Naive thymus-derived CD4-positive, alpha-beta T cell (primary cell): ENCODE measurements at regions of chr1 and their contacts with region 1.

Region 1: GRCh38 chr1:86380257-86380861 is 15.8 kb downstream of the ODF2L start:
- DNase-seq: peak in 7 of 9 donors; percentile 15 to 64 (median 46)
- ATAC-seq: peak; percentile 90
- H3K4me3 ChIP-seq: no peak overlapping the region
- H3K4me3 Mint-ChIP-seq: peak overlapping the region in 2 of 10 donors; percentile 15 to 45
- H3K27ac ChIP-seq: no peak overlapping the region
- H3K27ac Mint-ChIP-seq: peak overlapping the region in 1 of 9 donors; percentile 59
- H3K4me1 ChIP-seq: peaks cover 0 to 8% of the 10 kb centered on the region in 2 donors
- H3K4me1 Mint-ChIP-seq: peaks cover 1 to 21% (median 16%) of the 10 kb centered on the region in 7 donors
- H3K27me3 ChIP-seq: no peaks in the 10 kb centered on the region
- H3K27me3 Mint-ChIP-seq: no peaks in the 10 kb centered on the region

Region 2: GRCh38 chr1:86247597-86248279 is 132.6 kb before region 1 on chr1:
- CTCF ChIA-PET with region 1: no interaction called
- POLR2A ChIA-PET with region 1: no interaction called
- intact Hi-C with region 1: no loop called
- DNase-seq: no peak
- ATAC-seq: no peak
- H3K4me3 ChIP-seq: no peak overlapping the region
- H3K4me3 Mint-ChIP-seq: no peak overlapping the region
- H3K27ac ChIP-seq: no peak overlapping the region
- H3K27ac Mint-ChIP-seq: no peak overlapping the region
- H3K4me1 ChIP-seq: no peaks in the 10 kb centered on the region
- H3K4me1 Mint-ChIP-seq: no peaks in the 10 kb centered on the region
- H3K27me3 ChIP-seq: no peaks in the 10 kb centered on the region
- H3K27me3 Mint-ChIP-seq: peaks cover 0 to 6% (median 0%) of the 10 kb centered on the region in 5 donors

Region 3: DNA sequence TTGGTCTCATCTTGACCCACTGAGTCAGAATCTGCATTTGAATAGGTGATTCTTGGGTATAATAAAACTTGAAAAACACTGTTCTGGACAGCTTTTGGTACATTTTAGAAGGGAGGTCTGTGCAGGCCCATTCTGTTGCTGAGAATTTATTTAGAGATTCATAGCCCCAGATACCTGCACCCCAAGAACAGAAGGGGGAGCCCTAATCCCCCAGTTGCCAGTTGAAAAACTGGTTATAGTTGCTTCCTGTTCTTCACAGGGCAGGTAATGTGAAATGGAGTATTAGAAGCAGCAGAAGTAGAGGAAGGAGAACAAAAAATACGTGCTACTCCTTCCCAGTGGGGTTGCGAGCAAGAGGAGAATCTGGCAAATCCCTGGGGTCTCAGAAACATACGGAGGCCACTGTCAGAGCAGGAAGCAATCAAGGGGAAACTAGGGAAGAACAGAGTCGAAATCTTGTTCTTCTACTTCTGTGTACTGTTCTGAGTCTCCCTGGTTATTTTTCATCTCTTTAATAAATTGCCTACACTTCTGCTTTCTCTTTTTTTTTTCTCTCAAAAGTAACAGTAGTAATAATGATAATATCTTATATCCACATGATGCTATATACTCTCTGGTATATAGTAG is 39.0 kb after region 1 on chr1:
- CTCF ChIA-PET with region 1: interaction called, 3 read pairs
- POLR2A ChIA-PET with region 1: no interaction called
- intact Hi-C with region 1: loop called (anchors 1 kb)
- DNase-seq: peak in 7 of 9 donors; percentile 35 to 74 (median 65)
- ATAC-seq: peak; percentile 89
- H3K4me3 ChIP-seq: no peak overlapping the region
- H3K4me3 Mint-ChIP-seq: peak overlapping the region in 9 of 10 donors; percentile 53 to 85 (median 72)
- H3K27ac ChIP-seq: no peak overlapping the region
- H3K27ac Mint-ChIP-seq: peak overlapping the region in 8 of 9 donors; percentile 13 to 85 (median 32)
- H3K4me1 ChIP-seq: no peaks in the 10 kb centered on the region
- H3K4me1 Mint-ChIP-seq: peaks cover 4 to 8% (median 6%) of the 10 kb centered on the region in 7 donors
- H3K27me3 ChIP-seq: no peaks in the 10 kb centered on the region
- H3K27me3 Mint-ChIP-seq: peaks cover 0 to 6% (median 0%) of the 10 kb centered on the region in 5 donors

Region 4: DNA sequence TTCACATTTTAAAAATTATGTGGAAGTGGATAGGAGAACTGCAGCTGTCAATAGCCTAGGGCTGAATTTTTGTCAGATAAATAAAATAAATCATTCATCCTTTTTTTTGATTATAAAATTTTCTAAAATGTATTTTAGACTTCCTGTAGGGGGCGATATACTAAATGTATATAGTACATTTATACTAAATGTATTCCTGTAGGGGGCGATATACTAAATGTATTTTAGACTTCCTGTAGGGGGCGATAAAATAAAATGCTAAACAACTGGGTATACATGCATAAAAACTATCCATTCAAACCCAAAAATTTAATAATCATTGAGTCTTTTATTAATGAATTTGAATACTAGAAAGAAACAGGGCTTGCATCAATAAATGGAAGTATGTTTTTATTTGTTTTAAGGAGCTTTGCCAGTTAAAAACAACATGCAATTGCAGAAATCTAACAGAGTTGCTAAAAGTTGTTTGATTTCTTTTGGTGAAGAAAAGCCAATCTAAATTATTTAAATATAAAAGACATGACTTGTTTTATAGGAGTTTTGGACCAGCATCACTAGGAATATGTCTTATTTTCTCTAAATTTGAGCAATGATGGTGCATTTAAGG is 119.7 kb after region 1 on chr1:
- CTCF ChIA-PET with region 1: interaction called, 42 read pairs
- POLR2A ChIA-PET with region 1: interaction called, 3 read pairs
- intact Hi-C with region 1: loop called (anchors 1 kb)
- DNase-seq: peak in 6 of 9 donors; percentile 55 to 76 (median 73)
- ATAC-seq: peak; percentile 92
- H3K4me3 ChIP-seq: no peak overlapping the region
- H3K4me3 Mint-ChIP-seq: no peak overlapping the region
- H3K27ac ChIP-seq: no peak overlapping the region
- H3K27ac Mint-ChIP-seq: no peak overlapping the region
- H3K4me1 ChIP-seq: peaks cover 0 to 8% of the 10 kb centered on the region in 2 donors
- H3K4me1 Mint-ChIP-seq: peaks cover 0 to 18% (median 10%) of the 10 kb centered on the region in 7 donors
- H3K27me3 ChIP-seq: no peaks in the 10 kb centered on the region
- H3K27me3 Mint-ChIP-seq: peaks cover 6 to 46% (median 14%) of the 10 kb centered on the region in 5 donors

Region 5: GRCh38 chr1:86527306-86527705 is 146.9 kb after region 1 on chr1:
- CTCF ChIA-PET with region 1: no interaction called
- POLR2A ChIA-PET with region 1: no interaction called
- intact Hi-C with region 1: no loop called
- DNase-seq: no peak
- ATAC-seq: no peak
- H3K4me3 ChIP-seq: no peak overlapping the region
- H3K4me3 Mint-ChIP-seq: no peak overlapping the region
- H3K27ac ChIP-seq: no peak overlapping the region
- H3K27ac Mint-ChIP-seq: no peak overlapping the region
- H3K4me1 ChIP-seq: no peaks in the 10 kb centered on the region
- H3K4me1 Mint-ChIP-seq: no peaks in the 10 kb centered on the region
- H3K27me3 ChIP-seq: no peaks in the 10 kb centered on the region
- H3K27me3 Mint-ChIP-seq: peaks cover 0 to 5% (median 0%) of the 10 kb centered on the region in 5 donors

Region 6: GRCh38 chr1:86741947-86742572 is 361.7 kb after region 1 on chr1:
- CTCF ChIA-PET with region 1: no interaction called
- POLR2A ChIA-PET with region 1: no interaction called
- intact Hi-C with region 1: loop called (anchors 1 kb)
- DNase-seq: peak in 7 of 9 donors; percentile 12 to 43 (median 26)
- ATAC-seq: no peak
- H3K4me3 ChIP-seq: no peak overlapping the region
- H3K4me3 Mint-ChIP-seq: peak overlapping the region in 1 of 10 donors; percentile 60
- H3K27ac ChIP-seq: no peak overlapping the region
- H3K27ac Mint-ChIP-seq: no peak overlapping the region
- H3K4me1 ChIP-seq: peaks cover 5 to 12% of the 10 kb centered on the region in 2 donors
- H3K4me1 Mint-ChIP-seq: peaks cover 0 to 6% (median 0%) of the 10 kb centered on the region in 7 donors
- H3K27me3 ChIP-seq: no peaks in the 10 kb centered on the region
- H3K27me3 Mint-ChIP-seq: no peaks in the 10 kb centered on the region

Region 7: DNA sequence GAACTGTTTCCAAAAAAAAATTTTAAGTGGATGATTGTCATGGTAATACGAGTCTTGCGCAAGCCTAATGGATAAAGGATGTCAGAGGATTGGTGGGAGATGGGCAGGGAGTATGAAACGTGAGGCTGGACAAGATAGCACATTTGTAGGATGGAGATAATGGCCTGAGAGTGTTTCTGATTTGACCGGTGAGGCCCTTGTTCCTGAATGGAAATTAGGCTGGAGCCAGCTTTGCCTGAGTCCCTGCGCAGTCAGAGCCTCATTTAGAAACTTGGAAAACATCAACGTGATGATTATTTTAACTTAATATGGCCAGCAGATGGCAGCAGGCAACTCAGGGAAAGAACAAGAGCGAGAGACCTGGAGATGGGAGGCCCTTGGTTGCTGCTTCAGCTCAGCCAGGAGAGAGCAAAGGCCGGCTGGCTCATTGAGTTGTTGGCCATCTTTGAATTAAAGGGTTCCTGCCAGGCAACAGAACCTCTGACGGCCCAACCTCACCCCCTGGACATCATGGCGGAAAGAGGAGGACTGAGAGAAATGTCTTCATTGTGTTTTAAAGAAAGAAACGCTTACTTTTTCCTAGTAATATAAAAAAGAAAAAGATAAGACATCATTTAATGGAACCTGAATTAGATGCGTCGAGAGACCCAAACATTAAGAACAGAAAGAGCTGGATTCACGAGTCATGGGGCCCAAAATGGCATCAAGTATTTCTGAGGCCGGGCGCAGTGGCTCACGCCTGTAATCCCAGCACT is 453.3 kb after region 1 on chr1:
- CTCF ChIA-PET with region 1: no interaction called
- POLR2A ChIA-PET with region 1: no interaction called
- intact Hi-C with region 1: loop called in 1 of 2 experiments (anchors 1 kb)
- DNase-seq: peak; percentile 9 to 69 (median 60)
- ATAC-seq: peak; percentile 84
- H3K4me3 ChIP-seq: no peak overlapping the region
- H3K4me3 Mint-ChIP-seq: no peak overlapping the region
- H3K27ac ChIP-seq: no peak overlapping the region
- H3K27ac Mint-ChIP-seq: no peak overlapping the region
- H3K4me1 ChIP-seq: no peaks in the 10 kb centered on the region
- H3K4me1 Mint-ChIP-seq: peaks cover 0 to 7% (median 0%) of the 10 kb centered on the region in 7 donors
- H3K27me3 ChIP-seq: no peaks in the 10 kb centered on the region
- H3K27me3 Mint-ChIP-seq: peaks cover 0 to 7% (median 0%) of the 10 kb centered on the region in 5 donors

Region 8: DNA sequence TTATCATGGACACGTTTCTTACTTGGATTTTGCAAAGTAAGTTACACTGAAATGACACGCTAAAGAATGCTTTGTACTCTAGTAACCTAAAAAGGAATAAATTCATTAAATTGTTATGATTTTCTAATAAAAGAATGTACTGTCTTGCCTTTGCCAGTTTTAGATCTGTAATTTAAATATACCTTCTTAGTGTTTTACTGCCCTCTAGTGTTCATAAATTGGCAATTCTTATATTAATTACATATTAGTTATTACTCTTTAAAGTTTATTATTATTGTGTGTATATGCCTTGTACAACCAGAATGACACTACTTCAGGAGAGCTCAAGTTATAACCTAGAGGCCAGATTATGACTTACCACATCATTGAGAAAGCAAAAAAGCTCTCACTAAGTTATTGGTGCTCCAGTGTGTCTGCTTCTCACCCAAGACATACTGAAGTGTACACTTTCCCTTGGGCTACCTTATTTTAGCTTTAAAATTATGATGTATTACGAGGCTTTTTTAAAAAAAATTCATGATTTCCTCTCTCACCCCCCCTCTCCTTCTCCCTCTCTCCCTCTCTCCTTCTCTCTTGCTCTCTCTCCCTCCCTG is 704.0 kb after region 1 on chr1:
- CTCF ChIA-PET with region 1: interaction called, 5 read pairs
- POLR2A ChIA-PET with region 1: no interaction called
- intact Hi-C with region 1: loop called in 1 of 2 experiments (anchors 1 kb)
- DNase-seq: peak in 6 of 9 donors; percentile 11 to 59 (median 44)
- ATAC-seq: peak; percentile 65
- H3K4me3 ChIP-seq: no peak overlapping the region
- H3K4me3 Mint-ChIP-seq: no peak overlapping the region
- H3K27ac ChIP-seq: no peak overlapping the region
- H3K27ac Mint-ChIP-seq: no peak overlapping the region
- H3K4me1 ChIP-seq: no peaks in the 10 kb centered on the region
- H3K4me1 Mint-ChIP-seq: peaks cover 0 to 6% (median 4%) of the 10 kb centered on the region in 7 donors
- H3K27me3 ChIP-seq: no peaks in the 10 kb centered on the region
- H3K27me3 Mint-ChIP-seq: no peaks in the 10 kb centered on the region